ENCODE measurements at regions of chr2 and their contacts with region 1.

Region 1: GRCh38 chr2:75053484-75054112 is 95.2 kb downstream of the POLE4 start:
- DNase-seq: peak; percentile 64
- CTCF ChIP-seq: peak; percentile 82

Region 2: GRCh38 chr2:74919827-74920226 is 133.8 kb before region 1 on chr2:
- CTCF ChIA-PET with region 1: interaction called, 10 read pairs
- POLR2A ChIA-PET with region 1: no interaction called
- DNase-seq: peak; percentile 84
- CTCF ChIP-seq: peak; percentile 91

Region 3: DNA sequence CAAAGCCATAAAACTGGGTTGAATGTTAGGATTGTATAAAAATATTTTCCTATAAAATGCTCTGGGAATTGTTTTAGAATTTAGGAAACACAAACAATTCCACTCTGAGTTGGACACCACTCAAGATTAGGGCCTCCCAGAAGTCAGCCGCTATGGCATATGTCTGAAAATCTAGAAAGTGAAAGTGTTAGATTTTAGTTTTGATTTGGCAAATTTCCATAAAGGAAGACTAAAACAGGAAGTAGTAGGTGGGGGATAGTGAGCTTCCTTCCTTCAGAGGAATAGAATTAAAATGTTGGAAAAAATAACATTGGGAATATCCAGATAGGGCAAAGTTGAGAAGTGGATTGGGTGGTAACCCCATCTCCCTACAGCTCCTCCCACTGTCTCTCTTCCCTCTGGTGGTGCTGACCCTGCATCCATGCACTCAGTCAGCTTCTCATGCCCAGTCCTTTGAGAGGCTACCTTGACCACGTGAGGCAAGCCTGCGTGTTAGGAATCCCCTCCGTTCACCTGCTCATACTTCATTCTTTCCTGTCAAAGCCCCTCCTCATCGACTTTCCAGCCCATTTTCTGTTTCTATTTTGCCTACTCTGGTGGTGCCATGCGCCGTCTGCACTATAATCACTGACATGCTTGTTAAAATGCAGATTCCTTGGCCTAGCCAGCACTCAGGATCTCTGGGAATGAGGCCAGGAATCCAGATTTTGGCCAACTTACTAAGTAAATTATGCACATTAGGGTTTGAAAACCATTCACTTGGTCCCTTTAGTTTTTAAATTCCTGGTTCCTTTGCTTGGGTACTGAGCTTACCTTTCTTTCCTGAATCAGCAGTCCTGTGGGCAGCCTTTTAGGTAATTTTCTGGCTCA is 11.6 kb before region 1 on chr2:
- CTCF ChIA-PET with region 1: interaction called, 19 read pairs
- POLR2A ChIA-PET with region 1: no interaction called
- DNase-seq: no peak
- CTCF ChIP-seq: no peak

Region 4: GRCh38 chr2:75076088-75076487 is 22.5 kb after region 1 on chr2:
- CTCF ChIA-PET with region 1: interaction called, 20 read pairs
- POLR2A ChIA-PET with region 1: no interaction called
- DNase-seq: no peak
- CTCF ChIP-seq: no peak